ENCODE measurements at regions of chr6 and their contacts with region 1.

Region 1: DNA sequence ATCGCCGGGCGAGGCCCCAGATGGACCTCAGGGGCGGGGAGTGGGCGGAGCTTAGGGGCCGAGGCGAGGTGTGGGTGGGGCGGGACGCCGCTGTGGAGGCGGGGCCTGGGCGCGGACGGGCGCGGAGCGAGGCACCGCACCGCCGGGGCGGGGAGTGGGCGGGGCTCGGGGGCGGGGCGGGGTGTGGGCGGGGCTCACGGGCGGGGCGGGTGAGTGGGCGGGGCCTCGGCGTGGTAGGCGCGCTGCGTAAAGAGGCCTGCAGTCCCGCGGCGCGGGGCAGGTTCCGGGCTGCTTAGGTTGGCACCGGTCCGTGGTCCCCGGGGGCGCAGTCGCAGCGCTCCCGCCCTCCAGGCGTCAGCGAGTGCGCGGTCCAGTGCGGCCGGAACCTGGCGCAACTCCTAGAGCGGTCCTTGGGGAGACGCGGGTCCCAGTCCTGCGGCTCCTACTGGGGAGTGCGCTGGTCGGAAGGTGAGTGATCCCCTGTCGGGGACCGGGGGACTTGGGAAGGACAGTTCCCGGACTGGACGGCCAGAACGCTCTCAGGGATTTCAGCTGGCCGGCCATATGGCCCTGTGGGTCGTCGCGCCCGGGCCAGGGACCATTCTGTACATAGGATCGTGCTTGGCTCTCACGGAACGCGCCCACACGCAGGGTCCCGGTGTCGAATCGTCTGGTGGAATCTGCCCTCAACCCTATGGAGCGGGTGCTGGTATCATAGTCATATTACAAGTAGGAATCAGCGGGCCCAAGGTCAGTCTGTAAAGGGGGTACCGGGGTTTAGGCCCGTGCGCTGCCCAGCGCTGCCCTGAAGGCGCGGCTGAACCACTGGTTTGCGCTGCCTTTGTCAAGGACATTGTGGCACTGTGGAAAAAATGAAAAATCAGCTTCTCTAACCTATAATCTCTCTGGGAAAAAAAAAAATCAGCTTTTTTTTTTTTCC is at the start of gene NQO2:
- DNase-seq: peak; percentile 71
- ATAC-seq: peak; percentile 86
- H3K4me3 ChIP-seq: peak within 1 kb of the TSS; percentile 70 to 94
- H3K27ac ChIP-seq: peak within 1 kb of the TSS; percentile 81
- H3K4me1 ChIP-seq: peaks cover 18 to 26% of the 10 kb centered on the region in 2 experiments
- H3K27me3 ChIP-seq: no peaks in the 10 kb centered on the region
- CTCF ChIP-seq: 0 out of 6 replicates have a peak, but pooled peaks of 1 of the 3 experiments have one; percentile 3
- POLR2A ChIP-seq: peak; percentile 76
- RAD21 ChIP-seq: no peak
- total RNA-seq, gene NQO2: 82.9 TPM

Region 2: DNA sequence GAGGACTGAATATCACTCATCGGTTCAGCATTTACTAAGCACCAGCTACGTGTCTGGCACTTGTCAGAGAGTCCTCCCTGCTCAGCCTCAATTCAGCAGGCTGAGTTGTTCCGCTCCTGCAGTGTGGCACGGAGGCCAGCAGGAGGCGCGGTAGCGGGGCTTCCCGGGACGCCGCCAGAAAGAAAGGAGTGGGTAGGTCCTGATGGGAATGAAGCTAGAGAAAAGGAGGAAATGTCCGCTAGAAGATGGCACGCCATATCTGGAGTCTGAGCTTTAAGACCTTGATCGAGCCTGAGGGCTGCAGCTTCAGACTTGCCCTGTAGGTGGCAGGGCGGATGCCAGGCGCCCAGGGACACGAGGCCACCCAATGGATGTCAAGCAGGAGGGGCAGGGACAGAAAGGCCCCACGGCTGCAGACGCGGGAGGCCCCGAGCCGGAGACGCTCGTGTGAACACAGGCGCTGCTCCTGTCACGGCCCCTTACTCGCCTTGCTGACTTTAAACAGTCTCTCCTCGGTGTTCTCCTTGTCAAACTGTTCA is 47.3 kb before region 1 on chr6:
- CTCF ChIA-PET with region 1: interaction called, 11 read pairs
- POLR2A ChIA-PET with region 1: no interaction called
- RAD21 ChIA-PET with region 1: no interaction called
- intact Hi-C with region 1: no loop called
- DNase-seq: peak; percentile 91
- ATAC-seq: peak; percentile 96
- H3K4me3 ChIP-seq: no peak overlapping the region
- H3K27ac ChIP-seq: peak overlapping the region; percentile 12; the same call in 1 of the 2 replicates
- H3K4me1 ChIP-seq: peaks cover 10 to 18% of the 10 kb centered on the region in 2 experiments
- H3K27me3 ChIP-seq: no peaks in the 10 kb centered on the region
- CTCF ChIP-seq: peak; percentile 99 to 100 (median 99)
- POLR2A ChIP-seq: no peak
- RAD21 ChIP-seq: peak; percentile 83

Region 3: GRCh38 chr6:3023663-3024483 is 24.0 kb after region 1 on chr6:
- CTCF ChIA-PET with region 1: interaction called, 10 read pairs
- POLR2A ChIA-PET with region 1: interaction called, 5 read pairs
- RAD21 ChIA-PET with region 1: no interaction called
- intact Hi-C with region 1: loop called (anchors 2 kb)
- DNase-seq: peak; percentile 73
- ATAC-seq: peak; percentile 92
- H3K4me3 ChIP-seq: peak overlapping the region; percentile 26 to 37
- H3K27ac ChIP-seq: peak overlapping the region; percentile 82
- H3K4me1 ChIP-seq: peaks cover 21 to 40% of the 10 kb centered on the region in 2 experiments
- H3K27me3 ChIP-seq: no peaks in the 10 kb centered on the region
- CTCF ChIP-seq: no peak
- POLR2A ChIP-seq: peak; percentile 35
- RAD21 ChIP-seq: no peak

Region 4: GRCh38 chr6:3068329-3069214 is 68.7 kb after region 1 on chr6 and contains the start of gene RIPK1:
- CTCF ChIA-PET with region 1: interaction called, 3 read pairs
- POLR2A ChIA-PET with region 1: interaction called, 12 read pairs
- RAD21 ChIA-PET with region 1: interaction called in 1 of 2 experiments, 3 read pairs
- intact Hi-C with region 1: loop called (anchors 2 kb)
- DNase-seq: peak; percentile 69
- ATAC-seq: peak; percentile 81
- H3K4me3 ChIP-seq: peak within 1 kb of the TSS; percentile 68 to 87
- H3K27ac ChIP-seq: peak within 1 kb of the TSS; percentile 100
- H3K4me1 ChIP-seq: peaks cover 9 to 28% of the 10 kb centered on the region in 2 experiments
- H3K27me3 ChIP-seq: no peaks in the 10 kb centered on the region
- CTCF ChIP-seq: no peak
- POLR2A ChIP-seq: peak; percentile 74
- RAD21 ChIP-seq: peak; percentile 48
- total RNA-seq, gene RIPK1: 19.1 TPM

Region 5: DNA sequence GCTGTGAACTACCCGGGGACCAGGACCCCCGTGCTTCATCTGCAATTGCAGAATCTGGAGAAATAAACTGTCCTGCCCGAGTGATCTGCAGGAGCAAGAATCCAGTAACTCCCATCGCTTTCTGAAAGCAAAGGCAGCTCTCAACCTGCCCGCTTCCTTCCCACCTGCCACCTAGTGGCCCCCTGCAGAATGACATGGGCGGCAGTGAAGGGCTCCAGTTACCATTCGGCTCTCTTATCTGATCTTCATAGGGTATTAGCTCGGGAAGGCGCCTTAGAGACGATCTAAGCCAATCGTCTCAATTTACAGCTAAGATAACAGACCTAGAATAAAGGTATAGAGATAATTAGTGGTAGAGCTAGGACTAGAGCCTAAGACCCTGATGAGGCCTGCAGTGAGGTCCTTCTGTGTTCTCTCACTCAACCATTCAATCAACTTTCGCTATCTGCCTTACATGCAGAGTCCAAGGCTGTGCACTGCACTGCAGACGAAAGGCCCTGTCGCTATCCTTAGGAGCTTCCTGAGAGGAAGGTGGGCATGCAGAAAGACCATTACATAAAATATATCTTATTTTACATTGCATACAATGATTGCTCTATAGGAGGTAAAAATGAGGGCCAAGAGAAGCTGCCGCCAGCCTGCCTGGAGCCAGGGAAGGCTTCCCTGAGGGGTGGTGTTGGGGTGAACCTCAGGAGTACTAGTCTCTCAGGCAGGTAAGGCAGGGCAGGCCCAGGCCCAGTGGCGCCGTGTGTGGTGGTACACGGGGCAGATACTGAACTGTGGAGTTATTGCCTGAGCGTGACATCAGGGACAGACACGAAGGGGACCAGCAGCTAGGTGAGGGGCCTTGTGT is 251.8 kb after region 1 on chr6:
- CTCF ChIA-PET with region 1: no interaction called
- POLR2A ChIA-PET with region 1: no interaction called
- RAD21 ChIA-PET with region 1: no interaction called
- intact Hi-C with region 1: loop called (anchors 5 kb)
- DNase-seq: peak; percentile 66
- ATAC-seq: peak; percentile 87
- H3K4me3 ChIP-seq: peak overlapping the region; percentile 12 to 18
- H3K27ac ChIP-seq: no peak overlapping the region
- H3K4me1 ChIP-seq: peaks cover 0 to 33% of the 10 kb centered on the region in 2 experiments; a peak in 2 of 4 replicates
- H3K27me3 ChIP-seq: no peaks in the 10 kb centered on the region
- CTCF ChIP-seq: peak; percentile 94 to 97 (median 96)
- POLR2A ChIP-seq: no peak
- RAD21 ChIP-seq: peak; percentile 88